Mammary epithelial cell (primary cell): ENCODE measurements at regions of chrX and their contacts with region 1.

Region 1: DNA sequence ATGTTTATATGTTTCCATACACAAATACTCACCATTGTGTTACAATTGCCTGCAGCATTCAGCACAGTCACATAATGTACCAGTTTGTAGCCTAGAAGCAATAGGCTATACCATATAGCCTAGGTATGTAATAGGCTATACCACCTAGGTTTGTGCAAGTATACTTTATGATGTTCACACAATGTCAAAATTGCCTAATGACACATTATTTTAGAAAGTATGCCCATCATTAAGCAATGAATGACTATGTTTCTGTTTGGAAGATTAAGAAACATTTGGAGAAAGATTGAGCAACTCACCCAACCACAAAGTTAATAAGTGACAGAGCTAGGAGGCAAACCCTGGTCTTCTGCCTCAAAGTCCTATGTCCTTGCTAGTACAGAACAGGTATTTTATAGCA is 96.8 kb upstream of the GRIA3 start:
- DNase-seq: peak; percentile 67
- H3K4me3 ChIP-seq: no peak overlapping the region
- H3K27ac ChIP-seq: peak overlapping the region; percentile 17
- H3K4me1 ChIP-seq: peaks cover 20% of the 10 kb centered on the region
- H3K27me3 ChIP-seq: no peaks in the 10 kb centered on the region
- CTCF ChIP-seq: no peak

Region 2: GRCh38 chrX:122866530-122866929 is 220.8 kb before region 1 on chrX:
- CTCF ChIA-PET with region 1: no interaction called
- dilution Hi-C with region 1: no loop called
- in situ Hi-C with region 1: no loop called
- intact Hi-C with region 1: loop called (anchors 10 kb)
- DNase-seq: peak; percentile 68
- H3K4me3 ChIP-seq: no peak overlapping the region
- H3K27ac ChIP-seq: peak overlapping the region; percentile 22
- H3K4me1 ChIP-seq: peaks cover 7% of the 10 kb centered on the region
- H3K27me3 ChIP-seq: no peaks in the 10 kb centered on the region
- CTCF ChIP-seq: no peak

Region 3: GRCh38 chrX:123155327-123155726 is 68.0 kb after region 1 on chrX:
- CTCF ChIA-PET with region 1: no interaction called
- dilution Hi-C with region 1: no loop called
- in situ Hi-C with region 1: no loop called
- intact Hi-C with region 1: loop called (anchors 5 kb)
- DNase-seq: peak; percentile 9
- H3K4me3 ChIP-seq: no peak overlapping the region
- H3K27ac ChIP-seq: no peak overlapping the region
- H3K4me1 ChIP-seq: no peaks in the 10 kb centered on the region
- H3K27me3 ChIP-seq: no peaks in the 10 kb centered on the region
- CTCF ChIP-seq: no peak

Region 4: GRCh38 chrX:123167621-123168020 is 80.3 kb after region 1 on chrX:
- CTCF ChIA-PET with region 1: no interaction called
- dilution Hi-C with region 1: no loop called
- in situ Hi-C with region 1: no loop called
- intact Hi-C with region 1: no loop called
- DNase-seq: no peak
- H3K4me3 ChIP-seq: no peak overlapping the region
- H3K27ac ChIP-seq: no peak overlapping the region
- H3K4me1 ChIP-seq: no peaks in the 10 kb centered on the region
- H3K27me3 ChIP-seq: no peaks in the 10 kb centered on the region
- CTCF ChIP-seq: no peak